A549 (cell line): ENCODE measurements at regions of chr1 and their contacts with region 1.

Region 1: GRCh38 chr1:91165033-91165654 is 143.3 kb upstream of the ZNF644 start:
- DNase-seq: peak; percentile 53 to 60
- ATAC-seq: peak; percentile 94 to 99
- H3K4me3 ChIP-seq: no peak overlapping the region
- H3K27ac ChIP-seq: no peak overlapping the region
- H3K4me1 ChIP-seq: no peaks in the 10 kb centered on the region
- CTCF ChIP-seq: peak; percentile 66
- EP300 ChIP-seq: no peak
- POLR2A ChIP-seq: no peak
- RAD21 ChIP-seq: peak; percentile 68 to 71

Region 2: GRCh38 chr1:91135799-91136198 is 29.3 kb before region 1 on chr1:
- CTCF ChIA-PET with region 1: interaction called, 10 read pairs
- POLR2A ChIA-PET with region 1: no interaction called
- DNase-seq: no peak
- ATAC-seq: no peak
- H3K4me3 ChIP-seq: no peak overlapping the region
- H3K27ac ChIP-seq: no peak overlapping the region
- H3K4me1 ChIP-seq: no peaks in the 10 kb centered on the region
- CTCF ChIP-seq: no peak
- EP300 ChIP-seq: no peak
- POLR2A ChIP-seq: no peak
- RAD21 ChIP-seq: no peak

Region 3: DNA sequence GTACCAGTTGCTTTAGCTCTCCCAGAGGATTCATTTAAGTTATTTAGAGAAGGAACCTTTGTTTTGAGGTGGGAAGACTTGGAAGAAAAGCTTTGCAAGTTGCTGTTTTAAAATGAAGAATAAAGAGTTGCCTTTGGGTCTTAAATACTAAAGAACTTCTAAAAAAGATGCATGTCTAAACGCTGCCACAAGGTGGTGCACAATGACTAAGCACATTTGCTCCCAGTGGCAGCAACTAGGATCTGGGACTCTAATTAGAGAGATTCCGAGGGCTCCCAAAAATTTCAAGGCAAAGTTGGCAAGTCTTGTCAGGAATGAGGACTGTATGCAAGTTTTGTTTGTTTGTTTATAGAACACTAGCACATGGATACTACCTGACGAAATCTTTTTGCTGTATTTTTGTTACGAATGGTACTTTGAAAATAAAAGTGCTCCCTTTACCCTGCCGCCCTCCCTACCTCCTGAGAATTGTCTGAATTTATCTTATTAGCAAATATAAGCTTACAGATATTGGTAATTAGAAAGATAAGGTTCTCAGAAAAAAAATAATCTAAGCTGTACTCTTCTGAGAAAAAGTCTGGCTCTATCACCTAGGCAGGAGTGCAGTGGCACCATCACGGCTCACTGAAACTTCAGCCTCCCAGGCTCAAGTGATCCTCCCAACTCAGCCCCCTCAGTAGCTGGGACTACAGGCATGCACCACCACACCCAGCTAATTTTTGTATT is 117.7 kb after region 1 on chr1:
- CTCF ChIA-PET with region 1: interaction called, 90 read pairs
- POLR2A ChIA-PET with region 1: no interaction called
- DNase-seq: peak; percentile 43 to 77
- ATAC-seq: peak; percentile 73 to 85; a peak in 5 of 6 replicates
- H3K4me3 ChIP-seq: no peak overlapping the region
- H3K27ac ChIP-seq: peak overlapping the region; percentile 45 to 75
- H3K4me1 ChIP-seq: peaks cover 12% of the 10 kb centered on the region; the same call in 1 of the 3 replicates
- CTCF ChIP-seq: peak; percentile 79
- EP300 ChIP-seq: no peak
- POLR2A ChIP-seq: no peak
- RAD21 ChIP-seq: peak; percentile 79 to 86

Region 4: DNA sequence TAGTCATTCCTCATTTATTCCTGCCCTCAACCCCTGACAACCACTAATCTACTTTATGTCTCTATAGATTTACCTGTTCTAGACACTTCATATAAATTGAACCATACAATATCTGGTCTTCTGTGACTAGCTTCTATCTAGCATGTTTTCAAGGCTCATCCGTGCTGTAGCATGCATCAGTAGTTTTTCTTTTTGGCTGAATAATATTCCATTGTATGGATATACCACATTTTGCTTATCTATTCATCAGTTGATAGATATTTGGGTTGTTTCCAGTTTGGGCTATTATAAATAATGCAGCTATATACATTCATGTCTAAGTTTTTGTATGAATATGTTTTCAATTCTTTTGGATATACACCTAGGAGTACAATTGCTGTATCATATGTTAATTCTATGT is 138.0 kb after region 1 on chr1:
- CTCF ChIA-PET with region 1: no interaction called
- POLR2A ChIA-PET with region 1: no interaction called
- DNase-seq: no peak
- ATAC-seq: no peak
- H3K4me3 ChIP-seq: no peak overlapping the region
- H3K27ac ChIP-seq: no peak overlapping the region
- H3K4me1 ChIP-seq: no peaks in the 10 kb centered on the region
- CTCF ChIP-seq: no peak
- EP300 ChIP-seq: no peak
- POLR2A ChIP-seq: no peak
- RAD21 ChIP-seq: no peak

Region 5: DNA sequence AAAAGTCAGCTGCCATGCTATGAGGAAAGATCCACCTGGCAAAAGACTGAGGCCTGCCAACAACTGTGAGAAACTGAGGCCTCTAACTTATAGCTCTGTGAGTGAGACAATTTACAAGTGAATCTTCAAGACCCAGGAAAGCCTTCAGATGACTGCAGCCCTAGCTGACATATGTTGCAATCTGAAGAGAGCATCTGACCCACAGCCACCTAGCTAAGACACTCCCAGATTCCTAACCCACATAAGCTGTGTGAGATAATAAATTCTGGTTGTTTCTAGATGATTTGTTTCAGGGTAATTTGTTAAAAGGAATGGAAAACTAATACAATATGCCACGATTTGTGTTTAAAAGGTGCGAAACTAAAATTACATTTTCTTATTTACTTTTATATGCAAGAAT is 184.4 kb after region 1 on chr1:
- CTCF ChIA-PET with region 1: no interaction called
- POLR2A ChIA-PET with region 1: no interaction called
- DNase-seq: no peak
- ATAC-seq: no peak
- H3K4me3 ChIP-seq: no peak overlapping the region
- H3K27ac ChIP-seq: no peak overlapping the region
- H3K4me1 ChIP-seq: no peaks in the 10 kb centered on the region
- CTCF ChIP-seq: no peak
- EP300 ChIP-seq: no peak
- POLR2A ChIP-seq: no peak
- RAD21 ChIP-seq: no peak